HEK293 (cell line): ENCODE measurements at regions of chr19 and their contacts with region 1.

Region 1: GRCh38 chr19:13846557-13847406 is 30.2 kb upstream of the NANOS3 start:
- H3K4me3 ChIP-seq: peak overlapping the region; percentile 76
- H3K27ac ChIP-seq: peak overlapping the region; percentile 98
- H3K4me1 ChIP-seq: peaks cover 34% of the 10 kb centered on the region
- CTCF ChIP-seq: no peak

Region 2: DNA sequence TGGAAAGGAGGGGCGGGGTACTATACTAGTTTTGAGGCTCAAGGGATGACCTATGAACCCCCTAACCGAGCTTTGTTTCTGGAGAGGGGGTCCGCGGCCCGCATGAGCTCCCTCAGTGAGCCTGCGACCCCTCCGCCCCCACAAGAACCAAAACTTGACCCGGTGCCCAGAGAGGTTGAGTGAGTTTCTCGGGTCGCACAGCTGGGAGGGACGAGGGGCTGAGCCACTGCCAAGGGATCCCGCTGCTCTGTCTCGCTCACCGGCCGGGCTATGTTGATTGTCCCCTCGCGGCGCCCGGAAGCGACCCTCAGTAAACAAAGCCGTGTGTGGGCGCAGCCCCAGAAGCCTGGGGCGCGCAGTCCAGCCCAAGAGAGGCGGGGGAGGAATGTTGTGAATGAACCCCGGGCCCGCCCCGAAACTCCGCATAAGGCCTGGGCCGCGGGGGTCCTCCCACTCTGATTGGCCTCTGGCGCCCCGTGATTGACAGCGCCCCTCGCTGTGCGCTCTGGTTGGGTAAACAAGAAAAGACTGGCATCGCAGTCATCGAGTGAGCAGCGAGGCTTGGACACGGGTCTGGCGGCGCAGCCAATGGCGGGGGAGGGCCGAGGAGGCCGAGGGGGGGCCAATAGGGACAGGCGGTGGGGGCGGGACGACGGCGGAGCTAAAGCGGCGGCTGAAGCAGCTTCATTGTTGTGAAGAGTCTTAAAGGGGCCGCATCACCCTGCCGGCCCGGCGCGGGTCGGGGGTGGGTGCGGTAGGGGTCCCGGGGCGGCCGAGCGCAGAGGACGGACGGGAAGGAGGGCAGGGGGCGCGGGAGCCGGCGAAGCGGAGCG is 51.8 kb before region 1 on chr19 and contains the start of gene ZSWIM4:
- CTCF ChIA-PET with region 1: interaction called, 4 read pairs
- POLR2A ChIA-PET with region 1: interaction called, 18 read pairs
- H3K4me3 ChIP-seq: peak within 1 kb of the TSS; percentile 79
- H3K27ac ChIP-seq: peak within 1 kb of the TSS; percentile 76
- H3K4me1 ChIP-seq: peaks cover 8% of the 10 kb centered on the region
- CTCF ChIP-seq: no peak

Region 3: DNA sequence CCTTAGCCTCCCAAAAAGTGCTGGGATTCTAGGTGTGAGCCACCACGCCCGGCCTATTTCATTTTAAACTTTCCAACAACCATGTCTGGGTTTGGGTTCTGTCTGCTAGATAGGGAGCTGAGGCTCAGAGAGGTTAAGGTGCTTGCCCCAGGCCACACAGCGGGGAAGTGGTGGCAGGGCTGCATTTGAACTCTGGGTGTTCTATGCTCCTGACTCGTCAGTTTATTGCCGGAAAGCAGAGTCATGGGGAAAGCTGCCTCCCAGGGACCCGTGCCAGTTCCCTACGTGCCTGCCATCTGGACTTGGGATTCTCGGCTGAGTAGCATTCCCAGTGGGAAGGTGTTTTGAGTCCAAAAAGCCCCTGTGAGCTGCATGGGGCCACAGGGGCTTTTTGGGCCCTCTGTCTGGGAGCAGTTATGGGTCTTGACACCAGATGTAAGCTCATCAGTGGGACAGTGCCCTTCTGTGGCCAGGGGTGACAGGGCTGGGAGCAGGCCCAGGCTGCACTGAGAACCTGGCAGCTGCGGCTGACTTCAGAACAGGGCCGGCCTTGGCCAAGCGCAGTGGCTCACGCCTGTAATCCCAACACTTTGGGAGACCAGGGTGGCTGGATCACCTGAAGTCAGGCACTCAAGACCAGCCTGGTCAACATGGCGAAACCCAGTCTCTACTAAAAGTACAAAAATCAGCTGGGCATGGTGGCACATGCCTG is 148.4 kb after region 1 on chr19:
- CTCF ChIA-PET with region 1: no interaction called
- POLR2A ChIA-PET with region 1: no interaction called
- H3K4me3 ChIP-seq: no peak overlapping the region
- H3K27ac ChIP-seq: no peak overlapping the region
- H3K4me1 ChIP-seq: no peaks in the 10 kb centered on the region
- CTCF ChIP-seq: no peak